ENCODE measurements at regions of chr1 and their contacts with region 1.

Region 1: GRCh38 chr1:108719656-108720435 is 7.1 kb downstream of the FNDC7 start:
- DNase-seq: peak; percentile 89
- H3K4me3 ChIP-seq: no peak overlapping the region
- H3K27ac ChIP-seq: peak overlapping the region; percentile 82
- H3K4me1 ChIP-seq: peaks cover 37% of the 10 kb centered on the region
- H3K27me3 ChIP-seq: no peaks in the 10 kb centered on the region
- CTCF ChIP-seq: no peak

Region 2: GRCh38 chr1:108746372-108747205 is 26.7 kb after region 1 on chr1 and contains the start of gene STXBP3:
- CTCF ChIA-PET with region 1: no interaction called
- dilution Hi-C with region 1: no loop called
- in situ Hi-C with region 1: no loop called
- intact Hi-C with region 1: loop called (anchors 1 kb)
- DNase-seq: peak; percentile 95
- H3K4me3 ChIP-seq: peak within 1 kb of the TSS; percentile 75 to 89 (median 81)
- H3K27ac ChIP-seq: peak within 1 kb of the TSS; percentile 96
- H3K4me1 ChIP-seq: peaks cover 10% of the 10 kb centered on the region
- H3K27me3 ChIP-seq: no peaks in the 10 kb centered on the region
- CTCF ChIP-seq: peak; percentile 90 to 97
- total RNA-seq, gene STXBP3: 41.3 to 46.9 TPM

Measured in mammary epithelial cell (primary cell).